ENCODE measurements at regions of chr5 and their contacts with region 1.

Region 1: GRCh38 chr5:141701360-141702119 is 19.5 kb upstream of the ARAP3 start:
- DNase-seq: no peak
- H3K4me3 ChIP-seq: peak overlapping the region in 2 of 3 donors; percentile 58 to 66
- H3K27ac ChIP-seq: no peak overlapping the region
- H3K4me1 ChIP-seq: peaks cover 0 to 7% of the 10 kb centered on the region in 2 donors
- H3K27me3 ChIP-seq: peaks cover 0 to 7% of the 10 kb centered on the region in 2 donors
- CTCF ChIP-seq: no peak
- POLR2A ChIP-seq: no peak

Region 2: GRCh38 chr5:141031006-141031405 is 670.5 kb before region 1 on chr5:
- intact Hi-C with region 1: no loop called
- DNase-seq: no peak
- H3K4me3 ChIP-seq: no peak overlapping the region
- H3K27ac ChIP-seq: no peak overlapping the region
- H3K4me1 ChIP-seq: no peaks in the 10 kb centered on the region
- H3K27me3 ChIP-seq: no peaks in the 10 kb centered on the region
- CTCF ChIP-seq: no peak
- POLR2A ChIP-seq: no peak

Region 3: DNA sequence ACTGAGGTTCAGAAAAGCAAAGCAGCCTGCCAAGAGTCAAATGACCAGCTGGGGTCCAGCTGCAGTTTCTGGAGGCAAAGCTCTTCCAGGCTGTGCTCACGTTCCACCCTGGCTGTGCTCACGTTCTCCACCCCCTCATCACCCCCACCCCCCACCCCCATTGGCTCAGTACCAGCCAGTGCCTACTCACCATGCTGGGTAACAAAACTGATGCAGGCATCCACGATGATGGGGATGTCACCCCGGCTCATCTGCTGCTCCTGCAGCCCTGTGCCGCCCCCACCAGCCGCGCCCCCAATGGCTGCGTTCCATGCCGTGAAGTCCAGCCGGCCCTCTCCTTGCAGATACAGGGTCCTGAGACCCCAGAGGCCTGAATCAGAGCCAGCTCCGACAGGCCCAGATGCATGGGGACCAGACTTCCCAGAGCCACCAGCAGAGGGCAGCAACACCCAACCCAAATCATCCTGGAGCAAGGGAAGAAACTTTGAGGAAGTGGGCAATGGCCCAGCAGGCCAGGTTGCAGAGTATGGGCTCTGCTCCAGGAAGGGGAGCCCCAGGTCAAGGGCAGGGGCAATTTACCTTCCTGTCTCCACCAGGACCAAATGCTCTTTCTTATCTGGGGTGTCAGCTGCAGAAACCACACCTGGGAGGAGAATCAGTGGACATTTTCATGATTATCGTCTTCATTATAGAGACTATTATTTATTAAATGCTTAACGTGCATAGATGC is 36.6 kb before region 1 on chr5:
- intact Hi-C with region 1: no loop called
- DNase-seq: peak; percentile 61 to 77
- H3K4me3 ChIP-seq: no peak overlapping the region
- H3K27ac ChIP-seq: no peak overlapping the region
- H3K4me1 ChIP-seq: no peaks in the 10 kb centered on the region
- H3K27me3 ChIP-seq: no peaks in the 10 kb centered on the region
- CTCF ChIP-seq: peak; percentile 63 to 84 (median 70)
- POLR2A ChIP-seq: no peak

Region 4: DNA sequence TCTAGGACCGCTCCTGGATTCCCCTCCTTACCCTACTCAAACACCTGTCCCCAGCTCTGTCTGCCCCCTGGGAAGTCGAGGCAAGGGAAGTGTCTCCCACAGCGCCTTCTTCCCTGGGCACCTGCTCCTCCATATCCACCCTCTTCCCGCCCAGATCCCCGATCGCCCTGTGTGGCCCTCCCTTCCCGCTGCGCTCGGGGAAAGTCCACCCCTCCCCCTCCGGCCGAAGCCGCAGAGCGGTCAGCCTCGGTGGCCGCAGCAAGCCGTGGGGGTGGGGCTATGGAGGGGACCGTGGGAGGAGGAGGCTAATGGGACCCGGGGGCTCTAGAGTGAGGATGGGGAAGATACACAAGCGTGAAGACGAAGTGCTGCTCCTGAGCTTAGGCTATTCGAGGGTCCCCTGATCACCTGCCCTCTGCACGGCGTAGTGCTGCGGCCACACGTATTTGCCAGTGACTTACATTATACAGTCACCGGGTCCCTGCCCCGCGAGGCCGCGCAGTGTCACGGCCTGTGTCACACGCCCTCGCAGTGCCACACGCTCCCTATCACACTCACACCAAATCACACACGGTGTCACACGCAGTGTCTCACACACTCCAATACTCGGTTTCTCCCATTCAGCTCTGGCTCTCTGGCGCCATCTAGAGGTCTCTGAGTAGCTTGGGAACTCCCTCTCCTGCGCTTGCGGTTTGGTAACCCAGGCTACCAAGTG is 177.3 kb after region 1 on chr5:
- intact Hi-C with region 1: loop called (anchors 5 kb)
- DNase-seq: peak; percentile 92 to 95
- H3K4me3 ChIP-seq: peak overlapping the region; percentile 54 to 91 (median 76)
- H3K27ac ChIP-seq: peak overlapping the region; percentile 91 to 95
- H3K4me1 ChIP-seq: peaks cover 3 to 11% of the 10 kb centered on the region in 2 donors
- H3K27me3 ChIP-seq: peaks cover 5 to 18% of the 10 kb centered on the region in 2 donors
- CTCF ChIP-seq: peak; percentile 86 to 98 (median 91)
- POLR2A ChIP-seq: no peak

Measured in breast epithelium (tissue), 4 donors.